Posterior cingulate gyrus (tissue), 11 donors: ENCODE measurements at regions of chr15 and their contacts with region 1.

Region 1: DNA sequence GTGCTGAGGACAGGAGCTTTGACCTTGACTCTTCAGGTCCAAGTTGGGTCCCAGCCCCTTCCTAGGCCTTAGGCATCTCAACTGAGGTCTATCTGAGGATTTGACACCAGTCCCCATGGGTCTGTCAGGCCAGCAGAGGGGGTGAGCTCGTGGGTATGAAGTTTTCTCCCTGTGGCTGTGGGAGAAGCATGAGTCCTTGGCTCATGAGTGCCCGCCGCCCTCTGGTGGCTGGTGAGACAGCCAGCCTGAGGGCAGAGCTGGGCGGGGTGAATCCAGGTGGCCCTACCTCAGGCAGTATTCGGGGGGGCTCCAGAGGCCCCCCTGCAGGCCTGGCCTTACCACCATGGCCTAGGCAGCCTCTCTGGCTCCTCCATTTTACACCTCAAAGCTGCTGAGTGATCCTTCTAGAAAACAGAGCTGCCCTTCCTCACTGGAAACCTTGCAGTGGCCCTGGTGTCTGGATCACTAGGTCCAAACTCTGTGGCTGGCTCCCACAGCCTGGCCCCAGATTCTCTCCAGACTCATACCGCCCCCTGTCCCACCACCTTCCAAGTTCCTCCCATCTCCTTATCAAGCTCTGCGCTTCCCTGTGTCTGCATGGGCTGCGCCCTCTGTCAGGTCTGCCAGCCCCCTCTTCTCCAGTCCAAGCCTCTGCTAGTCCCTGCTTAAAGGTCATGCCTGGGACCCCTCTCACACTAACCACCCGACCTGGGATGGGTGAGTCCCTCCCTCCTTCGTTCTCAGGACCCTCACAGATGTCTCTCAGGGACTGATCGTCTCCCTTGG is 16.1 kb downstream of the SH2D7 start:
- DNase-seq: peak; percentile 49 to 96 (median 80)

Region 2: DNA sequence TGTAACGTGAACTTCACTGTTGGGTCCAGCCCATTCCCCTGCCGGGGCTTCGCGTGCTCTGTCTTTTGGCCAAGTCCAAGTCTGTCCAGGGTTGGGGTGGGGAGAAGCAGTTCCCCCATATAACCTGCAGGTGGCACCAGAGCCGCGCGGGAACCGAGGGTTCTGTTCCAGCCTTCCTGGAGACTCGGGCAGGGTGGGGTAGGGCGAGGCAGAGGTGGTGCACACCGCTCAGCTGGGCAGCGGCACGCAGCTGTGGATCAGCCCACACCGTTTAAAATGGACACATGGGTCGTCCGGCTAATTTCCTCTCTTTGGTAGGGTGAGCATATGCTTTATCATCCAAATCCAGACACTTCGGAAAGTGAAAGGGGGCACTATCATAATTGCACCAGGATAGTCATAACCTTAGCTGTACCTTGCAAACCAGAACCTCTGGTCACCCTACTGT is 149.0 kb before region 1 on chr15:
- intact Hi-C with region 1: loop called (anchors 2 kb)
- DNase-seq: peak; percentile 62 to 96 (median 82)

Region 3: DNA sequence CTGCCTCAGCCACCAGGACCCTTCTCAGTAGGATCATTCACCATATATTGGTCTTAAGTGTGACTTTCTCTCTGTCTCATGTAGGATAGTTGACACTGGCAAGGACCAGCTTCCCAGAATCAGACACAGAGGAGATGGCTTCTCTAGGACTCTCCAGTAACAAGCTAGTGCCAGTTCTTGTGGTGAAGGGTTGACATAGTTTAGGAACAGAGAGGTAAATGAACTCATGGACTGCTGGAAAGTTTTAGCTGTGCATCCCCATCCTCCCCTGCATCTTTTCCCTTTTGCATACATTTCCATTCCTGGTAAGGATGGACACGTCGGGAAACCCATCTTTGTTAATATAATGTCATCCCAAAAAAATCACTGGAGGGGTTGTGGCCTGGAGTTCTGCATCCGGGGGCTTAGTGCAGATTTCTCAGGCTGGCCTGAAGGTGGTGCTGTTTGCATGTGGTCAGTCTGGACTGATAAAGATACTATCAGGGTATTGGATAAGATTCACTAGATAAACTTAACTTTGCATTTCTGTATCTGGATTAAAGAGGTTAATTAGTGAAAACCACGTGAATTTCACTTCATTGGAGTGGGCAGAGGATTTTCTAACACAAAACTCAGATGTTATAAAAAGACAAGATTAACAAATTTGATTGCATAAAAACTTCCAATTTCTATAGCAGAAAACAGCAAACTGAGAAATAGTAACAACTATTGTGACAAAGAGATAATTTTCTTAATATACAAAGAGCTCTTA is 141.8 kb before region 1 on chr15:
- intact Hi-C with region 1: loop called (anchors 1 kb)
- DNase-seq: peak in 9 of 10 donors; percentile 50 to 94 (median 70)

Region 4: DNA sequence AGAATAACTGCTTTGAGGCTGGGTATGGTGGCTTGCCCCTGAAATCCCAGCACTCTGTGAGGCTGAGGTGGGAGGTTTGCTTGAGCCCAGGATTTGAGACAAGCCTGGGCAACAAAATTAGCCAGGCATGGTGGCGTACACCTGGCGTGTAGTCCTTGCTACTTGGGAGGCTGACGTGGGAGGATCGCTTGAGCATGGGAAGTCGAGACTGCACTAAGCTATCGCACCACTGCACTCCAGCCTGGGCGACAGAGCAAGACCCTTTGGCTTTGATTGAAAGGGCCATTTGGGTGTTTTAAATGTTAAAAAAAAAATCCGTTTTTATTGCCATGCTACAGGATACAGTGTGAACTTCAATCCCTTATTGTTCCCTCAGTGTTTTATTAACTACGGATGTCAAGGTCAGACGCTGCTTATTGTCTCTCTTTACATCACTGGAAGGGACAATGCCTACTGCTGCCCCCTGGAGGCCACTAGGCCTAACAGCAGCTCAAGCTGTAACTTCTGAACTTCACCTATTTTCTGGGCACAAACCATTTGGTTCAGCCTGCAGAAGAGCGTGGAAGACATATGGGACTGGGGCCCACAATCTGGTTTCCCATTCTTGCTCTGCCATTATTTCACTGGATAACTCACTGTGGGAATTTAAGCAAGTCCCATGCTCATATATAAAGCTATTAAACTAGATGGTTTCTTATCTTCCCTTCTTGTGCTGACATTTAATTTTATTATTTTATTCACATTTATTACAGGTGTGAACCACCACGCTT is 314.3 kb after region 1 on chr15:
- intact Hi-C with region 1: loop called (anchors 5 kb)
- DNase-seq: peak; percentile 36 to 95 (median 70)